ENCODE measurements at regions of chr2 and their contacts with region 1.

Region 1: DNA sequence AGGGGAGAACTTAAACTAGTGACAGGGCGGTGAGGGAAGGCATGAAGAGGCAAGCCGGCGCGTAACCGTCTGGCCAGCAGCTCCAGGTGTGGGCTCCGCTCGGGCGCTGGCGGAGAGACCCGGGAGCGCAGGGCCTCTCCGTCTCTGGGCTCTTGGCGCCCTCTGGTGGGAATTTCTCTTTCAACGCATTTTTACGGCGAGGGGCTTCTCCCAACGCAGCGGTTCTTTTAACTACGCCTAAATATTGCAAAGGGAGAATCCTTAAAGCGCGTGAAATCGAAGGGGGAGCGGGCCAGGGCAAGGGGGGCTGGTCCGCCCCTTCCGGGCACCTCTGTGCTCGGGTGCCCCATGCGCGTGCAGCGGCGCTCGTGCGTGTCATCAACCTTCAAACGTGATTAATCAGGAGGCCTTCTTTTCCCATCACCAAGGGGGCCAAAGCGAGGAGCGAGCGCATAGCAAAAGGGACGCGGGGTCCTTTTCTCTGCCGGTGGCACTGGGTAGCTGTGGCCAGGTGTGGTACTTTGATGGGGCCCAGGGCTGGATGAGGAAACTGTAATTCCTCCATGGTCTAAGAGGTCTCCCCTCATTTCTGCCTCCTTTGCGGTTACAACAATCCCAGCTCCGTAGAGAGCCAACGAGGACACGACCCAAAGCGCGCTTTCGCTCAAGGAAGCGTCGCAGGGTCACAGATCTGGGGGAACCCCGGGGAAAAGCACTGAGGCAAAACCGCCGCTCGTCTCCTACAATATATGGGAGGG is 762 bp upstream of the GAD1 start:
- DNase-seq: peak; percentile 40 to 81
- ATAC-seq: peak; percentile 54 to 64 (median 61)
- H3K4me3 ChIP-seq: peak overlapping the region; percentile 12
- H3K4me3 Mint-ChIP-seq: peak overlapping the region; percentile 82
- H3K27ac ChIP-seq: no peak overlapping the region
- H3K27ac Mint-ChIP-seq: no peak overlapping the region
- H3K4me1 ChIP-seq: peaks cover 52% of the 10 kb centered on the region
- H3K4me1 Mint-ChIP-seq: peaks cover 32 to 49% of the 10 kb centered on the region in 2 donors
- H3K27me3 ChIP-seq: peaks cover 70% of the 10 kb centered on the region
- H3K27me3 Mint-ChIP-seq: peaks cover 69 to 76% of the 10 kb centered on the region in 2 donors
- CTCF ChIP-seq: peak; percentile 68

Region 2: GRCh38 chr2:169933124-169933711 is 882.7 kb before region 1 on chr2:
- intact Hi-C with region 1: loop called (anchors 5 kb)
- DNase-seq: peak in 1 of 2 donors; percentile 43
- ATAC-seq: peak in 2 of 3 donors; percentile 56 to 73
- H3K4me3 ChIP-seq: no peak overlapping the region
- H3K4me3 Mint-ChIP-seq: no peak overlapping the region
- H3K27ac ChIP-seq: no peak overlapping the region
- H3K27ac Mint-ChIP-seq: no peak overlapping the region
- H3K4me1 ChIP-seq: no peaks in the 10 kb centered on the region
- H3K4me1 Mint-ChIP-seq: no peaks in the 10 kb centered on the region
- H3K27me3 ChIP-seq: no peaks in the 10 kb centered on the region
- H3K27me3 Mint-ChIP-seq: no peaks in the 10 kb centered on the region
- CTCF ChIP-seq: peak; percentile 66

Region 3: DNA sequence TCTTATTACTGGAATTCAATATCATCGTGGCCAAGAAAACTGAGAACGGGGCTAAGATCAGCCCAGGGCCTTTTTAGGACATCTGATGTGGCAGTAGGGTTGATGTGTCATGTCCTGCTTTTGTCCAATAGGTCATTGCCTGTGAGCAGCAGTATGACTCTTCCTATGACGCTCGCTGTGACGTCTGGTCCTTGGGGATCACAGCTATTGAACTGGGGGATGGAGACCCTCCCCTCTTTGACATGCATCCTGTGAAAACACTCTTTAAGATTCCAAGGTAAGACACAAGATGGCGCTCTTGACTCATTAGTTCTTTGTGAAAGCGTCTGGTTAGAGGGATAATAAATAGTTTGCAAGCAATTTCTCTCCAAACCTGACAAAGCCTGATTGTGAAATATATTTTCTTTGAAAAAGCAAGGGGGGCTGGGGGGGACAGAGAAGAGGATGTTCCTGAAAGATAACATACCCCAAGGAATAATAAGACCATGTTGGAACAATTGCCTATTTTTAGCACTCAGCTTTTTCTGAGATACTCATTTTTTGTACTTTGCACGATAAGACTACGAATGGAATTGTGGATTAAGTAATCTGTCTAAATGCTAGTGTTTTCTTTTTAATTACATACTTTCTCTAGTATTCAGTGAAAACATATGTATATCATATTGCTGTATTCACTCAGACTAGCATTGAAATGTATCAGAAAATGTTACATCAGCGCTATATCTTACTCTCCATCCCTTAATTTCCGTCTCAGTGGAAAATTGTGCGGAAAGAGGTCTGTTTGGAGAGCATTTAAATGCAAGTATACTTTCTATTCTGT is 579.9 kb before region 1 on chr2:
- intact Hi-C with region 1: loop called (anchors 1 kb)
- DNase-seq: peak in 1 of 2 donors; percentile 35
- ATAC-seq: peak in 1 of 3 donors; percentile 45
- H3K4me3 ChIP-seq: no peak overlapping the region
- H3K4me3 Mint-ChIP-seq: no peak overlapping the region
- H3K27ac ChIP-seq: no peak overlapping the region
- H3K27ac Mint-ChIP-seq: no peak overlapping the region
- H3K4me1 ChIP-seq: no peaks in the 10 kb centered on the region
- H3K4me1 Mint-ChIP-seq: no peaks in the 10 kb centered on the region
- H3K27me3 ChIP-seq: no peaks in the 10 kb centered on the region
- H3K27me3 Mint-ChIP-seq: peaks cover 17 to 21% of the 10 kb centered on the region in 2 donors
- CTCF ChIP-seq: peak; percentile 43

Region 4: GRCh38 chr2:170361090-170361936 is 454.6 kb before region 1 on chr2:
- intact Hi-C with region 1: loop called (anchors 2 kb)
- DNase-seq: peak; percentile 19 to 76
- ATAC-seq: peak; percentile 54 to 84 (median 59)
- H3K4me3 ChIP-seq: no peak overlapping the region
- H3K4me3 Mint-ChIP-seq: no peak overlapping the region
- H3K27ac ChIP-seq: no peak overlapping the region
- H3K27ac Mint-ChIP-seq: no peak overlapping the region
- H3K4me1 ChIP-seq: no peaks in the 10 kb centered on the region
- H3K4me1 Mint-ChIP-seq: peaks cover 5 to 7% of the 10 kb centered on the region in 2 donors
- H3K27me3 ChIP-seq: no peaks in the 10 kb centered on the region
- H3K27me3 Mint-ChIP-seq: peaks cover 13 to 35% of the 10 kb centered on the region in 2 donors
- CTCF ChIP-seq: peak; percentile 57

Region 5: GRCh38 chr2:170409164-170409535 is 406.8 kb before region 1 on chr2:
- intact Hi-C with region 1: loop called (anchors 2 kb)
- DNase-seq: peak; percentile 53 to 87
- ATAC-seq: peak; percentile 54 to 76 (median 71)
- H3K4me3 ChIP-seq: no peak overlapping the region
- H3K4me3 Mint-ChIP-seq: peak overlapping the region; percentile 35
- H3K27ac ChIP-seq: no peak overlapping the region
- H3K27ac Mint-ChIP-seq: no peak overlapping the region
- H3K4me1 ChIP-seq: peaks cover 6% of the 10 kb centered on the region
- H3K4me1 Mint-ChIP-seq: peaks cover 8% of the 10 kb centered on the region in 2 donors
- H3K27me3 ChIP-seq: peaks cover 8% of the 10 kb centered on the region
- H3K27me3 Mint-ChIP-seq: peaks cover 30% of the 10 kb centered on the region in 2 donors
- CTCF ChIP-seq: peak; percentile 86

Region 6: GRCh38 chr2:170736628-170737027 is 79.3 kb before region 1 on chr2:
- intact Hi-C with region 1: loop called (anchors 1 kb)
- DNase-seq: no peak
- ATAC-seq: no peak
- H3K4me3 ChIP-seq: no peak overlapping the region
- H3K4me3 Mint-ChIP-seq: no peak overlapping the region
- H3K27ac ChIP-seq: no peak overlapping the region
- H3K27ac Mint-ChIP-seq: no peak overlapping the region
- H3K4me1 ChIP-seq: no peaks in the 10 kb centered on the region
- H3K4me1 Mint-ChIP-seq: no peaks in the 10 kb centered on the region
- H3K27me3 ChIP-seq: no peaks in the 10 kb centered on the region
- H3K27me3 Mint-ChIP-seq: peaks cover 16 to 35% of the 10 kb centered on the region in 2 donors
- CTCF ChIP-seq: no peak

Measured in natural killer cell (primary cell).